T-cell (primary cell): ENCODE measurements at regions of chr12 and their contacts with region 1.

Region 1: DNA sequence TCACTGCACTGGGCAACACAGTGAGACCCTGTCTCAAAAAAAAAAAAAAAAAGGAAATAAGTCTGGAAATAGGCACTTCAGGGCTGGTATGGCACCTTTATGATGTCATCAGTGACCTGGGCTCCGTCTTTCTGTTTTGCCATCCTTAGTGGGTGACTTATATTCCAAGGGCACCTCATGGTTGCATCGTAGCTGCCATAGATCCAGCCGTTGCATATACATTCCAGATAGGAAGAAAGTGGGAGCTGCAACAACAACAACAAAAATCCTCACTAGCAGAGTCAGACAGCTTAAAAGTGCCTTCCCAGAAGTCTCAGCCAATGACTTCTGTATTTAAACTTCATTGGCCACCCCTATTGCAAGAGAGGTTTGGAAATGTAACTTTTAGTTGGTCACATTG is 26.4 kb downstream of the MYL2 start:
- DNase-seq: no peak
- ATAC-seq: peak in 1 of 4 experiments; percentile 18
- H3K4me3 ChIP-seq: no peak overlapping the region
- H3K4me3 Mint-ChIP-seq: no peak overlapping the region
- H3K27ac ChIP-seq: no peak overlapping the region
- H3K27ac Mint-ChIP-seq: no peak overlapping the region
- H3K4me1 ChIP-seq: peaks cover 2 to 5% of the 10 kb centered on the region in 2 experiments
- H3K4me1 Mint-ChIP-seq: peaks cover 6 to 8% (median 8%) of the 10 kb centered on the region in 3 donors
- H3K27me3 ChIP-seq: peaks cover 0 to 35% of the 10 kb centered on the region in 2 experiments
- H3K27me3 Mint-ChIP-seq: peaks cover 0 to 11% of the 10 kb centered on the region in 2 donors

Region 2: DNA sequence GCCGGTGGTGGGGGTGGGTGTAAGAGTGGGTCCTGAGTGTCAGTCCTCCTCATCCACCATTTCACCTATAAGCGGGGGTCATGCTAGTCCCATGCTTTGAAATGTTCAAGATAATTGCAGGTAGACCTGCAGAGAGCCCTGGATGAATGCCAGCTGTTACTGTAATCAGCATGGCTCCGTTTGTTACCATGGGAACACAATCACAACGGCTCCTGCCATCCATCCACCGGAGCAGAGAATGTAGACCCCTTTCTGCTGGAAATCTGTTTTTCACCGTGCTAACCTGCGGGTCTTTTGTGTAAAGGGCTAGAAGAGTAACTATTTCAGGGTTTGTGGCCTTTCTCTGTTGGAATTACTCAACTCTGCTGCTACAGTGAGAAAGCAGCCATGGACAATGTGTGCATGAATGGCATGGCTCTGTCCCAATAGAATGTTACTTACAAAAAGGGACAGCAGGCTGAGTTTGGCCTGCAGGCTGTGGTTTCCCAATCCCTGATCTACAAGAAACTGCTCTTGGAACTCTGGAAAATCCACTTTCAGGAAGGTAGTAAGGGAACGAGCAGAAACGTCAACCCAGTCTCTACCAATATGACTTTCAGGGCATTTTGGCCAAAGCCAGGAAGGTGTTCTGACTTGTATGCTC is 1453.0 kb before region 1 on chr12:
- CTCF ChIA-PET with region 1: no interaction called
- POLR2A ChIA-PET with region 1: no interaction called
- DNase-seq: no peak
- ATAC-seq: no peak
- H3K4me3 ChIP-seq: no peak overlapping the region
- H3K4me3 Mint-ChIP-seq: no peak overlapping the region
- H3K27ac ChIP-seq: no peak overlapping the region
- H3K27ac Mint-ChIP-seq: no peak overlapping the region
- H3K4me1 ChIP-seq: no peaks in the 10 kb centered on the region
- H3K4me1 Mint-ChIP-seq: no peaks in the 10 kb centered on the region
- H3K27me3 ChIP-seq: no peaks in the 10 kb centered on the region
- H3K27me3 Mint-ChIP-seq: no peaks in the 10 kb centered on the region

Region 3: DNA sequence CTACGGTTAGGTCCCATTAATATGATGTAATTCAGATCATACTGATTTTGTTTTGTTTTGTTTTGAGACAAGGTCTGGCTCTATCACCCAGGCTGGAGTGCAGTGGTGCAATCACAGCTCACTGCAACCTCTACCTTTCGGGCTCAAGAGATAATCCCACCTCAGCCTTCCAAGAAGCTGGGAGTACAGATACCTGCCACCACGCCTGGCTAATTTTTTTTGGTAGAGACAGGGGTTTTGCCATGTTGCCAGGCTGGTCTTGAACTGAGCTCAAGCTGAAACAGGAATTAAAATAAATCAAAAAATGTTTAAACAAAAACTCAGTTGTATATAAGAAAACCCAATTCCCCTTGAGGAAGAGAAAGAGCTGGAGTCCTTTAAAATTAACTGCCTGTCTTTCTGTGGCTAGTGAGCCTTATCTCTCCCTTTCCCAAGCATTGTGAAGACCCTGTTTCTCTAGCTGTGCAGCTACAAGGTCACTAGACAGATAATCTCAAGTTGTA is 472.7 kb before region 1 on chr12:
- CTCF ChIA-PET with region 1: interaction called in 1 of 2 experiments, 10 read pairs
- POLR2A ChIA-PET with region 1: no interaction called
- DNase-seq: no peak
- ATAC-seq: no peak
- H3K4me3 ChIP-seq: no peak overlapping the region
- H3K4me3 Mint-ChIP-seq: no peak overlapping the region
- H3K27ac ChIP-seq: no peak overlapping the region
- H3K27ac Mint-ChIP-seq: no peak overlapping the region
- H3K4me1 ChIP-seq: no peaks in the 10 kb centered on the region
- H3K4me1 Mint-ChIP-seq: no peaks in the 10 kb centered on the region
- H3K27me3 ChIP-seq: peaks cover 0 to 11% of the 10 kb centered on the region in 2 experiments
- H3K27me3 Mint-ChIP-seq: no peaks in the 10 kb centered on the region